Endothelial cell of umbilical vein (primary cell): ENCODE measurements at regions of chr2 and their contacts with region 1.

Region 1: GRCh38 chr2:177397481-177398289 is 5.1 kb downstream of the AGPS start:
- DNase-seq: peak; percentile 65
- H3K4me3 ChIP-seq: no peak overlapping the region
- H3K27ac ChIP-seq: peak overlapping the region; percentile 82
- H3K4me1 ChIP-seq: peaks cover 76% of the 10 kb centered on the region
- H3K27me3 ChIP-seq: no peaks in the 10 kb centered on the region
- CTCF ChIP-seq: no peak
- POLR2A ChIP-seq: no peak

Region 2: GRCh38 chr2:177093371-177093770 is 304.3 kb before region 1 on chr2:
- CTCF ChIA-PET with region 1: no interaction called
- POLR2A ChIA-PET with region 1: no interaction called
- dilution Hi-C with region 1: no loop called
- intact Hi-C with region 1: no loop called
- DNase-seq: no peak
- H3K4me3 ChIP-seq: no peak overlapping the region
- H3K27ac ChIP-seq: no peak overlapping the region
- H3K4me1 ChIP-seq: peaks cover 9% of the 10 kb centered on the region
- H3K27me3 ChIP-seq: peaks cover 0 to 1% of the 10 kb centered on the region in 2 experiments
- CTCF ChIP-seq: no peak
- POLR2A ChIP-seq: no peak

Region 3: GRCh38 chr2:177212106-177212890 is 185.4 kb before region 1 on chr2 and contains the start of gene HNRNPA3:
- CTCF ChIA-PET with region 1: no interaction called
- POLR2A ChIA-PET with region 1: no interaction called
- dilution Hi-C with region 1: no loop called
- intact Hi-C with region 1: loop called (anchors 1 kb)
- DNase-seq: peak; percentile 100
- H3K4me3 ChIP-seq: peak within 1 kb of the TSS; percentile 99 to 100 (median 100)
- H3K27ac ChIP-seq: peak within 1 kb of the TSS; percentile 100
- H3K4me1 ChIP-seq: peaks cover 33% of the 10 kb centered on the region
- H3K27me3 ChIP-seq: no peaks in the 10 kb centered on the region
- CTCF ChIP-seq: peak in 1 of 2 donors; percentile 2
- POLR2A ChIP-seq: peak; percentile 97
- total RNA-seq, gene HNRNPA3: 316 and 322 TPM in 2 replicates

Region 4: GRCh38 chr2:177239932-177240630 is 157.6 kb before region 1 on chr2:
- CTCF ChIA-PET with region 1: no interaction called
- POLR2A ChIA-PET with region 1: no interaction called
- dilution Hi-C with region 1: no loop called
- intact Hi-C with region 1: loop called (anchors 5 kb)
- DNase-seq: peak; percentile 75
- H3K4me3 ChIP-seq: peak overlapping the region in 1 of 3 experiments; percentile 0
- H3K27ac ChIP-seq: peak overlapping the region; percentile 99
- H3K4me1 ChIP-seq: peaks cover 56% of the 10 kb centered on the region
- H3K27me3 ChIP-seq: no peaks in the 10 kb centered on the region
- CTCF ChIP-seq: no peak
- POLR2A ChIP-seq: no peak

Region 5: DNA sequence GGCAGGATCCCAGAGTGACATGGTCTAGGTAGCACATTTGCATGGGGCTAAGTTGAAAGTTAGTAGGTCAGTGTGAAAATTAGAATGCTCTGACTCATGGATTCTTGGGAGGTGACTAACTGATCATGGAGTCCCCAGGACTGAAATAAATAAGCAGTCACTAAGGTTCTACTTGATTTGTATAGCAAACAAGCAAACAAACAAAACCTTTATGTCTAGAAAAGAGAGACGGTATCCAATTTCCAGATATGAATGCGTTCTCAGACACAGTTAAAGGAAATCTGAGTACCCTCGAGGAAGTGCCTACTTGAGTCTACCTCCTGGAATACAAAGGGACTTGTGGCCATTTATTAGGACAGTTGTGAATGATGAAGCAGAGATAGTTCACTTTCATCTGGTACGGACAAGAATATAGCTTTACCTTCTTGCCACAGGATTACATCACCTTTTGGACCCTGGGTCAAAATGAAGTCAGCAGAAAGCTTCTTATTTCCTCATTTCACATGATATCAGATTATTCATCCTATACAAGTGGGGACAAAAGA is 59.4 kb before region 1 on chr2:
- CTCF ChIA-PET with region 1: interaction called, 16 read pairs
- POLR2A ChIA-PET with region 1: interaction called, 3 read pairs
- dilution Hi-C with region 1: no loop called
- intact Hi-C with region 1: loop called (anchors 1 kb)
- DNase-seq: peak; percentile 72
- H3K4me3 ChIP-seq: no peak overlapping the region
- H3K27ac ChIP-seq: peak overlapping the region; percentile 82
- H3K4me1 ChIP-seq: peaks cover 26% of the 10 kb centered on the region
- H3K27me3 ChIP-seq: no peaks in the 10 kb centered on the region
- CTCF ChIP-seq: no peak
- POLR2A ChIP-seq: no peak

Region 6: GRCh38 chr2:177359836-177360595 is 37.7 kb before region 1 on chr2:
- CTCF ChIA-PET with region 1: no interaction called
- POLR2A ChIA-PET with region 1: no interaction called
- dilution Hi-C with region 1: no loop called
- intact Hi-C with region 1: no loop called
- DNase-seq: no peak
- H3K4me3 ChIP-seq: no peak overlapping the region
- H3K27ac ChIP-seq: no peak overlapping the region
- H3K4me1 ChIP-seq: no peaks in the 10 kb centered on the region
- H3K27me3 ChIP-seq: no peaks in the 10 kb centered on the region
- CTCF ChIP-seq: no peak
- POLR2A ChIP-seq: no peak

Region 7: GRCh38 chr2:177413703-177414102 is 16.0 kb after region 1 on chr2:
- CTCF ChIA-PET with region 1: interaction called, 14 read pairs
- POLR2A ChIA-PET with region 1: no interaction called
- dilution Hi-C with region 1: no loop called
- intact Hi-C with region 1: loop called (anchors 2 kb)
- DNase-seq: no peak
- H3K4me3 ChIP-seq: no peak overlapping the region
- H3K27ac ChIP-seq: no peak overlapping the region
- H3K4me1 ChIP-seq: peaks cover 13% of the 10 kb centered on the region
- H3K27me3 ChIP-seq: no peaks in the 10 kb centered on the region
- CTCF ChIP-seq: no peak
- POLR2A ChIP-seq: no peak

Region 8: DNA sequence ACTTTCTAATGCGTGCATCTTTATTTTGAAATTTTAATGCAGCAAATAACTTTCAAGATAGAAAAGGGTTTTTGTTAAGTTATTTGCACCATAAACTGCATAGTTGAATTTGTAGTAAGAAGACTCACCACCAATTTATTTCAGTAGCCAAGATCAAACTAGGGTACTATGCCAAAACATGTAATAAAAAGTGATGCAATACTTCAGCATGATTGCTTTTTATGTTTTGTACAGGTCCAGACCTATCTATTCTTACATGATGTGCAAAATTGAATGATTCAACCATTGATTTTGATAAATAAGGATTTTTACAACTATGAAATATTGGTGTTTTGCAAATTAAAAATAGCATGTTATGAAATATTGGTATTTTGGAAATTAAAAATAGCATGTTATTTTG is 21.6 kb after region 1 on chr2:
- CTCF ChIA-PET with region 1: interaction called, 14 read pairs
- POLR2A ChIA-PET with region 1: no interaction called
- dilution Hi-C with region 1: no loop called
- intact Hi-C with region 1: loop called (anchors 2 kb)
- DNase-seq: no peak
- H3K4me3 ChIP-seq: no peak overlapping the region
- H3K27ac ChIP-seq: no peak overlapping the region
- H3K4me1 ChIP-seq: peaks cover 26% of the 10 kb centered on the region
- H3K27me3 ChIP-seq: no peaks in the 10 kb centered on the region
- CTCF ChIP-seq: no peak
- POLR2A ChIP-seq: no peak

Region 9: DNA sequence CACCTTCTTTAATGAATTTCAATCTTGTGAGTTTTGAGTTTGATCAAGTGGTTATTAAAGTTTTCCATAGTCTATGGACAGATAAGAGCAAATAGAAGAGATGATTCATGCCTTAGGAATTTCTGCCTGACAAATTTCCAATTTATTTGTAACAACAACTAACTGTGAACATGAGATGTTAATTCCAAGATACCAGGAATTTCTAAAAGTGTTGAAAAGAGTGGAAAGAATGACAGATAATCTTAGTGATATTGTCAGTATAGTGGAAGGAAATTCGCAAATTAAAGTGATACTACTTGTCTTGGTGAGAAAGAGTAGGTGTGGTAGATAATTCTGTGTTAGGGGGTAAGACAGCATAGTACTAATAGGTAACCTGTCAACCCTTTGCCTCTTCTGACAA is 77.3 kb after region 1 on chr2:
- CTCF ChIA-PET with region 1: no interaction called
- POLR2A ChIA-PET with region 1: no interaction called
- dilution Hi-C with region 1: no loop called
- intact Hi-C with region 1: loop called (anchors 1 kb)
- DNase-seq: peak; percentile 86
- H3K4me3 ChIP-seq: no peak overlapping the region
- H3K27ac ChIP-seq: peak overlapping the region; percentile 61
- H3K4me1 ChIP-seq: peaks cover 15% of the 10 kb centered on the region
- H3K27me3 ChIP-seq: no peaks in the 10 kb centered on the region
- CTCF ChIP-seq: no peak
- POLR2A ChIP-seq: no peak